Right cardiac atrium (tissue), 5 donors: ENCODE measurements at regions of chr3 and their contacts with region 1.

Region 1: DNA sequence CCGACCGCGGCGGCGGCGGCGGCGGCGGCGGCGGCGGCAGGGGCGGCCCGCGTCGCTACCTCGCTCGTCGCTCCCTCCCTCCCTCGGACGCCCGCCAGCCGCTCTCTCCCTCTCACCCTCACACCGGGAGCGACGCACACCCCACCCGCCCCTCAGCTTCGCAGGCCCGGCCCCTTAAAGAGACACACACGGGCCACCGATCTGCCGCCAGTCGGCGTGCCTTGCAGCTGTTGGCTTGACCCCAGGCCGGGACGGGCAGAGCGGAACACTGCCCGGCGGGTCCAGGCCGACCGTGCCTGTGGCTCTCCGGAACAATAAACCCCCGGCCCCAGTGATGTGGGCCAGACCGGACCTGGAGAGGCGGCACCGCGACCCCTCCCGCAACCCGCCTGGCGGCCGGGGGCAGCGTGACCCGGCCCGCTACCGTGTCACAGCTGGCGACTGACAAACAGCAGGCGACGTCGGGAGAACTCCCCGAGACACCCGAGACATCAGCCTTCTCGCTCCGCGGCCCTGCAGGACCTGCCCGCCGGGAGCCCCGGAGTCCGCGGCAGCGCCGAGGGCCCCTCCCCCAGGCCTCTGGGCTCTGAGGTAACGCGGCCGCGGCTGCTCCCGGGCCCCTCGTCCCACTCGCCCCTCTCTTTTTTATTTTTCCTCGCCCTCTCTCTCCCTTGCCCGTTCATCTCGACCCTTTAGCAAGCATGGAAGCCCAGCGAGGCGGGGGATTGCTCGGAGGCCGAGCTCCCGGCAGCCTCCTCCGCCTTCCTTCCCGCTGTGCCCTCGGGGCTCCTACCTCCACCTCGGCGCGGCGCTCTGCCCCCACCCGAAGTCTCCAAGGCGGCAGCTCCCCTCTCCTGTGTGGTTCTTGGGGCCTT is at the start of gene SETD2:
- DNase-seq: peak; percentile 97 to 99 (median 98)
- ATAC-seq: peak; percentile 98
- H3K4me3 ChIP-seq: peak within 1 kb of the TSS; percentile 90
- H3K27ac ChIP-seq: peak within 1 kb of the TSS; percentile 93
- H3K4me1 ChIP-seq: peaks cover 6% of the 10 kb centered on the region
- H3K27me3 ChIP-seq: no peaks in the 10 kb centered on the region
- total RNA-seq, gene SETD2: 28.4 to 35.6 (median 32.0) TPM

Region 2: GRCh38 chr3:47022641-47023071 is 141.6 kb before region 1 on chr3:
- intact Hi-C with region 1: loop called in 1 of 4 experiments (anchors 10 kb)
- DNase-seq: peak in 2 of 3 donors; percentile 21 to 51
- ATAC-seq: peak; percentile 46 to 53
- H3K4me3 ChIP-seq: no peak overlapping the region
- H3K27ac ChIP-seq: peak overlapping the region; percentile 23
- H3K4me1 ChIP-seq: peaks cover 3% of the 10 kb centered on the region
- H3K27me3 ChIP-seq: no peaks in the 10 kb centered on the region

Region 3: GRCh38 chr3:47047673-47048072 is 116.6 kb before region 1 on chr3:
- intact Hi-C with region 1: no loop called
- DNase-seq: no peak
- ATAC-seq: no peak
- H3K4me3 ChIP-seq: no peak overlapping the region
- H3K27ac ChIP-seq: no peak overlapping the region
- H3K4me1 ChIP-seq: no peaks in the 10 kb centered on the region
- H3K27me3 ChIP-seq: no peaks in the 10 kb centered on the region

Region 4: DNA sequence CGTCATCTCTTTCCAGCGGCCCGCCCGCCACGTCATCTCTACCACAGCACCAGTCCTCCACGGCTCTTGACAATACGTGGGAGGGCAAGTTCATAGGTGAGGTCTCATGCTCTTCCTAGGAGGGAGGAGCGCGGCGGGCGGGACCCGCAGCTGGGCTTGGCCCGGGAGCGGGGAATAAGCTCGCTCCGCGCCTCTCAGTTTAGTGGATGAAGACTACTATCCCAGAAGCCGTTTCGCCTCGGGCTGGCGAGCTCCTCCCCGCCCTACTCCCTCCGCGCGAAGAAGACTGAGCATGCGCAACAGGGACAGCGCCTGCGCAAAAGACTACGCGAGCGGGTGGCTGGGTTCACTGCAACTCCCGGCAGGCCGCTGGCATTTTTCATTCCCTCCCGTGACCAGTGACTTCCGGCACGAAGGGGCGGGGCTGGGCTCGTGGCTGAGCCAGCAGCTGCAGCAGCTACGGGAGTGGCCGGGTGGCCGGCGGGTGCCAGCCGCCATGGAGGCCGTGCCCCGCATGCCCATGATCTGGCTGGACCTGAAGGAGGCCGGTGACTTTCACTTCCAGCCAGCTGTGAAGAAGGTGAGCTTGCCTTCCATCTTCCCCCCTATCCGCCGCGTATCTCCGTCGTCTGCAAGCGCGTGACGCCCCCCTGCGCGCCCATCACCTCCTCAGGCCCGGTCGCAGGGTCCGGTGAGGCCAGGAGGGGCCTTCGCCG is 216.5 kb after region 1 on chr3 and contains the start of gene PTPN23:
- intact Hi-C with region 1: no loop called
- DNase-seq: peak; percentile 99 to 100 (median 99)
- ATAC-seq: peak; percentile 93 to 95
- H3K4me3 ChIP-seq: peak within 1 kb of the TSS; percentile 71
- H3K27ac ChIP-seq: peak within 1 kb of the TSS; percentile 69
- H3K4me1 ChIP-seq: peaks cover 2% of the 10 kb centered on the region
- H3K27me3 ChIP-seq: no peaks in the 10 kb centered on the region
- total RNA-seq, gene PTPN23: 17.7 to 23.0 (median 18.0) TPM

Region 5: GRCh38 chr3:47440131-47440530 is 275.9 kb after region 1 on chr3:
- intact Hi-C with region 1: no loop called
- DNase-seq: no peak
- ATAC-seq: no peak
- H3K4me3 ChIP-seq: no peak overlapping the region
- H3K27ac ChIP-seq: no peak overlapping the region
- H3K4me1 ChIP-seq: peaks cover 5% of the 10 kb centered on the region
- H3K27me3 ChIP-seq: no peaks in the 10 kb centered on the region

Region 6: GRCh38 chr3:47802734-47803477 is 638.7 kb after region 1 on chr3 and contains the start of gene DHX30:
- intact Hi-C with region 1: no loop called
- DNase-seq: peak; percentile 92 to 96 (median 94)
- ATAC-seq: peak; percentile 95
- H3K4me3 ChIP-seq: peak within 1 kb of the TSS; percentile 91
- H3K27ac ChIP-seq: peak within 1 kb of the TSS; percentile 90
- H3K4me1 ChIP-seq: no peaks in the 10 kb centered on the region
- H3K27me3 ChIP-seq: no peaks in the 10 kb centered on the region
- total RNA-seq, gene DHX30: 46.3 to 51.3 (median 51.1) TPM